ENCODE measurements at regions of chr10 and their contacts with region 1.

Region 1: DNA sequence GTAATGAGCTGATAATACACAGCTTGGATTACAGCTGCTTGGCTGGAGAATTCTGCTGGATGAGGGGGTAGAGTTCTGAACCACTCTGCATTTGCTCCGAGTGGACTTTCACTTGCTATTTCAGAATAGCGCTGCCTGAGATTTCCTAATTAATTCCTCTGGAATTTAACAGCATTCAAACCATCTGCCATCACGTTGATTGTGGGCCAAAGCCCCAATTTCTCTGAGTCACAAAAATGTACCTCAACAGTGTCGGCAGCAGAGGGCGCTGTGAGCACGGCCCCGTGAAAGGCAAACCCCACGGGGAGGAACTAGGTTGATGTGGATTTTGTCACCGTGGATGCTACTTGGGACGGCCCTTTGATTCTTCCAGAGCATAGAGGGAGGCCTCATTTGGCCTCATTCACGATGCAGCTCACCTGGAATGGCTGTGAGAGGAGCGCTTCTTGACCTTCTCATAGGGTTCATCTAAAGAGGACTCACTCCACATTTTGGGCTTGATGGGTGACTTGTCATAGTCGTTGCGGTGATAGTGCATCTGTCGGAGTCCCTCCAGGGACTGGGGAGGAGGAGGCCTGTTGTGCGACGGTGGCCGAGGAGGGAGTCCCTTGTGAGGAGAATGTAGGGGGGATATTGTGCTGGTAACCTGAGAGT is 73.3 kb downstream of the PRPF18 start:
- DNase-seq: peak; percentile 58 to 77 (median 74)
- H3K4me3 ChIP-seq: peak overlapping the region in 2 of 7 experiments; percentile 48 to 57
- H3K27ac ChIP-seq: no peak overlapping the region
- H3K4me1 ChIP-seq: peaks cover 0 to 22% (median 17%) of the 10 kb centered on the region in 4 experiments
- H3K27me3 ChIP-seq: no peaks in the 10 kb centered on the region

Region 2: DNA sequence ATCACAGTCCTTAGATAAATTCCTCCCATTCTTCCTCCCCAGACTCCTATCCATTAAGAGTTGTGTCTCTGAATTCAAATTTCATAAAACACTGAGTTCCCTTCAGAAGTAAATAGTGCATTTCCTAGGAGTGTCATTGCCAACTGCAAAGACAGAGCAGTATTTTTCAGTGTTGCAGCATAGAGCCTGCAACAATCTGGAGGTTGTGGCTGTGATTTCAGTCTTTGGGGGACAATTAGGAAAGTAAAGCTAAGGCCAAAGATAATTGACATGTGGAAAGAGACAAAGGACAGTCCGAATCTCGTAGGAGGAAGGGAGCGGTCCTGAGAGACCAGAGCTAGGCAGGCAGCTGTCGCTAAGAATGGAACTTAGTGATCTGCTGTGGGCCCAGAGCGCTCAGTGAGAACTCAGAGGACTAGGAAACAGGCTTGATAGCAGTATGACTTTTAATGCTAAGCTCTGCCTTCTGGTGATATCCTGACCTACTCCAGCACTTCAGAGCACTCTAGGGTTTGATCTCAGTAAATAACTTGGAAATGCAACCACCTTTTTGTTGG is 27.1 kb before region 1 on chr10:
- CTCF ChIA-PET with region 1: no interaction called
- POLR2A ChIA-PET with region 1: no interaction called
- DNase-seq: no peak
- H3K4me3 ChIP-seq: no peak overlapping the region
- H3K27ac ChIP-seq: no peak overlapping the region
- H3K4me1 ChIP-seq: peaks cover 0 to 16% (median 0%) of the 10 kb centered on the region in 4 experiments
- H3K27me3 ChIP-seq: no peaks in the 10 kb centered on the region

Region 3: DNA sequence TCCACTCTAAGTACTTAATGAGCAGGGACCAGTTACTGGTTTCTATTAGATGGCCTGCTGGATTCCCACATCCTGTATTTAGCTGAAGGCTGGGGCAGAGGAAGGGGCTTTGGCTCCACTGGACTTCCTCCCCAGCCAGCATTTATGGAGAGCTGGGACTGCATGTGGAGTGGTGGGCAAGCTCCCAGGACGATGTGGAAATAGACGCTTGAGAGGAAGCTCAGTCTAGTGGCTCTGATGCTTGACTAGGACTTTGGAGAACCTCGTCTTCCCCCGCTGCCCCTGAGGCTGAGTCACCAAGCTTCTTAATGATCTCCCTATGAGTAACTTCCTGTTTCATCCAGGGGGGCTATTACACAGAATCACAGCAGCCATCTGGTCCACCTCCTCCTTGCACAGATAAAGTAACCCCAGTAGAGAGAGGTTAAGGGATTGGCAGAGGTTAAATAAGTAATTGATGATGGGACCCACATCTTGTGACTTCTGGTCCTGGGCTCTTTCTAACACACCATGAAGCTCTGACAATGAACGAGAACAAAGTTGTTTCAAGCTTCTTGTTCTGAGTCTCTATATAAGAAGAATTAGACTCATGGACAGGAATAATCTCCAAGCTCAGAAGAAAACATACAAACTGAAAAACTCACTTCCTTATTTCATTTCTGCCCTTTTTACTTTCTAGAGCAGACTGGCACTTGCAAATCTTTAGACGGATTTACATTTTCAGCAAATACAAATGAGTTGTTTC is 53.0 kb after region 1 on chr10:
- CTCF ChIA-PET with region 1: interaction called, 14 read pairs
- POLR2A ChIA-PET with region 1: no interaction called
- DNase-seq: peak; percentile 88 to 97 (median 96)
- H3K4me3 ChIP-seq: peak overlapping the region in 1 of 7 experiments; percentile 46
- H3K27ac ChIP-seq: no peak overlapping the region
- H3K4me1 ChIP-seq: peaks cover 10 to 27% (median 21%) of the 10 kb centered on the region in 4 experiments
- H3K27me3 ChIP-seq: no peaks in the 10 kb centered on the region

Region 4: GRCh38 chr10:13743101-13743693 is 83.2 kb after region 1 on chr10:
- CTCF ChIA-PET with region 1: interaction called, 11 read pairs
- POLR2A ChIA-PET with region 1: interaction called, 4 read pairs
- DNase-seq: peak; percentile 29 to 82 (median 76)
- H3K4me3 ChIP-seq: peak overlapping the region in 2 of 7 experiments; percentile 30 to 32
- H3K27ac ChIP-seq: no peak overlapping the region
- H3K4me1 ChIP-seq: peaks cover 3 to 34% (median 22%) of the 10 kb centered on the region in 4 experiments
- H3K27me3 ChIP-seq: no peaks in the 10 kb centered on the region

Region 5: DNA sequence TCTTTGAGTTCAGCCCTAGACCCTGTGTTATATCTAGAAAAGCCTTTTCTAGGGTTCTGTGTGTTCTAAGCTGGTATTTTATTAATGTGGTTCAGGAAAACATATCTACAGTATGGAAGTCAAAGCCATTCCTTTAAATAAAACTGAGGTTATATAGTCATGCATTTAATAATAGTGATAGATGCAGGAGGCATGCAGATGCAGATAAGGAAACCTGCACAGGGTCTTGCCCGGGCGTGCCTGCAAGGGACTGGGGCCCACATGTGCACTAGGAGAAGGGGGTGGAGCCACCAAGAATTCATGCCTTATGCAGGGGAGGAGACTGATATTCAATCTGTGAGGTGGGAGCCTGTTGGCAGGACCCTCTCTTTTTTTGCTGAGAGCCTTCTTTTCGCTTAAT is 98.3 kb after region 1 on chr10:
- CTCF ChIA-PET with region 1: no interaction called
- POLR2A ChIA-PET with region 1: no interaction called
- DNase-seq: no peak
- H3K4me3 ChIP-seq: no peak overlapping the region
- H3K27ac ChIP-seq: no peak overlapping the region
- H3K4me1 ChIP-seq: peaks cover 0 to 8% (median 3%) of the 10 kb centered on the region in 4 experiments
- H3K27me3 ChIP-seq: no peaks in the 10 kb centered on the region

Region 6: GRCh38 chr10:13776861-13777311 is 116.9 kb after region 1 on chr10:
- CTCF ChIA-PET with region 1: interaction called, 39 read pairs
- POLR2A ChIA-PET with region 1: no interaction called
- DNase-seq: peak in 2 of 3 donors; percentile 46 to 65
- H3K4me3 ChIP-seq: no peak overlapping the region
- H3K27ac ChIP-seq: no peak overlapping the region
- H3K4me1 ChIP-seq: no peaks in the 10 kb centered on the region
- H3K27me3 ChIP-seq: no peaks in the 10 kb centered on the region

Region 7: DNA sequence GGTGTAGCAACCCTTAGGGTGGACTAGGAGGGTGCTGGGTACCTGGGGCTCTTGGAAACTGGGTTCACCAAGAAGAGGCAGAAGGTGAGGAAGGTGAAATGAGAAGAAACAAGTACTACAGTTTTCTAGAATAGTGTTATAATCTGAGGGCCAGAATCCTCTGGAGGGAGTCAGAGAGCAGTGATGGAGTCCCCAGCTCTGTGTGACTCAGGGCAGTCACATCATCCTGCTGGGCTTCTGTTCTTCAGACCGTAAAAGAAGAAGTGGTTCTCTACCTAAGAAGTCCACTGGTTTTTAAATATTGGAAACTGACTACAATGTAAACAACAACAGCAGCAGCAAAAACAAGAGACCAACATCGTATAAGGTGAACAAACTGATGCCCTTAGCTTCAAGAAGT is 124.0 kb after region 1 on chr10:
- CTCF ChIA-PET with region 1: interaction called, 25 read pairs
- POLR2A ChIA-PET with region 1: no interaction called
- DNase-seq: peak; percentile 35 to 76 (median 61)
- H3K4me3 ChIP-seq: no peak overlapping the region
- H3K27ac ChIP-seq: no peak overlapping the region
- H3K4me1 ChIP-seq: peaks cover 0 to 12% (median 12%) of the 10 kb centered on the region in 4 experiments
- H3K27me3 ChIP-seq: no peaks in the 10 kb centered on the region